HEK293 (cell line): ENCODE measurements at regions of chr5 and their contacts with region 1.

Region 1: GRCh38 chr5:14644623-14645237 is 19.8 kb upstream of the OTULIN start:
- H3K4me3 ChIP-seq: no peak overlapping the region
- H3K27ac ChIP-seq: no peak overlapping the region
- H3K4me1 ChIP-seq: no peaks in the 10 kb centered on the region
- CTCF ChIP-seq: no peak

Region 2: DNA sequence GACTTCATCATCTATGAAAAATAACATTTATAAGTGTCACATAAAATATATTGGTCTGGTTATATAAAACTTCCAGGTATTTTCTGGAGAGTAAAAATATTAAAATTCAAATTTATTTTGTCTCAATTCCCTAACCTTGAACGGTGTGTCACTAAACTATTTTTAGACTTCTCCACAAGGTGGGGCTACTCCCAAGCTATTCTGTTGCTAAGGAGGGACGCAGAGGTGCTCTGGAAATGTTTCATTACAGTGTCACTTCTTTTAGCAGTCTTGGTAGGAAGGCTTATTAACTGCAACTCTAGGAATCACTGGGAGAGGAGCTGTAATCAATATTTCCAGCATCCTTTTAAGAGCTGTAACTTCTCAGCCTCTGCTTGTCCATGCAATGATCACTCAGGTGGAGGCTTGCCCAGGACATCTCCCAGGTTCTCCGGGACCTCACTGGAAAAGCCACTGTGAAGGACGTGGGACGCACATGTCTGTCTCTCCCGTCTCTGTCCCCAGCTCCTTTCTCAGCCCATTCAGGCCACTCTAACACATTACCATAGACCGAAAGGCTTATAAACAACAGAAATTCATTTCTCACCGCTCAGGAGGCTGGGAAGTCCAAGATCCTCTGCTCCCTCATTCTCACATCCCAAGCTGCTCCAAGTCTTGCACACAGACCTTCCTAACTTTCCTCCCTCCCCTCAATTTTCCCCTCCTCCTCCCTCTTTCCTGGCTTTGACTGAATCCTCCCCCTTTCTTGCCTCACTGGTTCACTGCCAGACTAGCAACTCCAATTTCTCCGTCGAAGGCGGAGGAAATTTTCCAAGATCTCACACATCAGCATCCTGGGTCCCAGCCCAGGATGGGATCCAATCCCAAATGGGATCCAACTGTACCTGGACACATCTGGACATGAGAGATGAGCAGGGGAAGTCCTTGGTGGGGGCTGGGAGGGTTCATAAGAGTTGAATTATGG is 667.6 kb before region 1 on chr5:
- CTCF ChIA-PET with region 1: interaction called, 42 read pairs
- POLR2A ChIA-PET with region 1: no interaction called
- H3K4me3 ChIP-seq: no peak overlapping the region
- H3K27ac ChIP-seq: no peak overlapping the region
- H3K4me1 ChIP-seq: no peaks in the 10 kb centered on the region
- CTCF ChIP-seq: peak; percentile 32; the same call in 1 of the 2 replicates

Region 3: DNA sequence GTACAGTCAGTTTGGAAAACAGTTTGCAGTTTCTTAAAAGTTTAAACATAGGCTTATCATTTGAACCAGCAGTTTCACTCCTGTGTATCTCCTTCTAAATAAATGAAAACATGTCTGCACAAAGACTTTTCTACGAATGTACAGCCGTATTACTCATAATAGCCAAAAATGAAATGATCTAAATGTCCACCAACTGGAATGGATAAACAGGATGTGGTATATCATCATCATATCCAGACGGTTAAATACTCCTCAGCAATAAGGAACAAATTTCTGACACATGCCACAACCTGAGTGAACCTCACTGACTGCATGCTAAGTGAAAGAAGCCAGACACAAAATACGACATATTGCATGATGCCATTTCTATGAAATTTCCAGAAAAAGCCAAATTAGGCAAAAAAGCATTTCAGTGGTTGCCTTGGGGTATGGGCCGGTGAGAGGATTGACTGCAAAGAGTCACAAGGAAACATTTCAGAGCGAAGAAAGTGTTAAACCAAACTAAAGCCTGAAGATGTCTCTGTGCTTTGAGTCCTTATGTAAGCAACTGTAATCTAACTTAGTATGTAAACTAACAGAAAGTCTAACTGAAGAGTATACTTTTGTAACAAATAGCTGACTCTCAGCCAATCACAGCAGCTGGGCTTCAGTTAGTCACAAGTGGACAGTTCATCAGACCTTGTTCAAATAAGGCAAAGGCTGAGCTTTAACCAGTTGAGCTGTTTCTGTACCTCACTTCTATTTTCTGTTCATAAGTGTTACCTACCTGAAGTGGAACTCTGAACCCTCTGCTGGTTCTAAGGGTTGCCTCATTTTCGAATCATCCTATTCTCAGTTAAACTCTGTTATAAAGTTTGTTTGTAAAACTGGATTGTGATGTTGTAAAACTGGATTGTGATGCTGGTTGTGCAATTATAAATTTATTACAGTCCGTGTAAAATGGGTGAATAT is 436.4 kb before region 1 on chr5:
- CTCF ChIA-PET with region 1: no interaction called
- POLR2A ChIA-PET with region 1: no interaction called
- H3K4me3 ChIP-seq: no peak overlapping the region
- H3K27ac ChIP-seq: no peak overlapping the region
- H3K4me1 ChIP-seq: peaks cover 38% of the 10 kb centered on the region
- CTCF ChIP-seq: no peak

Region 4: DNA sequence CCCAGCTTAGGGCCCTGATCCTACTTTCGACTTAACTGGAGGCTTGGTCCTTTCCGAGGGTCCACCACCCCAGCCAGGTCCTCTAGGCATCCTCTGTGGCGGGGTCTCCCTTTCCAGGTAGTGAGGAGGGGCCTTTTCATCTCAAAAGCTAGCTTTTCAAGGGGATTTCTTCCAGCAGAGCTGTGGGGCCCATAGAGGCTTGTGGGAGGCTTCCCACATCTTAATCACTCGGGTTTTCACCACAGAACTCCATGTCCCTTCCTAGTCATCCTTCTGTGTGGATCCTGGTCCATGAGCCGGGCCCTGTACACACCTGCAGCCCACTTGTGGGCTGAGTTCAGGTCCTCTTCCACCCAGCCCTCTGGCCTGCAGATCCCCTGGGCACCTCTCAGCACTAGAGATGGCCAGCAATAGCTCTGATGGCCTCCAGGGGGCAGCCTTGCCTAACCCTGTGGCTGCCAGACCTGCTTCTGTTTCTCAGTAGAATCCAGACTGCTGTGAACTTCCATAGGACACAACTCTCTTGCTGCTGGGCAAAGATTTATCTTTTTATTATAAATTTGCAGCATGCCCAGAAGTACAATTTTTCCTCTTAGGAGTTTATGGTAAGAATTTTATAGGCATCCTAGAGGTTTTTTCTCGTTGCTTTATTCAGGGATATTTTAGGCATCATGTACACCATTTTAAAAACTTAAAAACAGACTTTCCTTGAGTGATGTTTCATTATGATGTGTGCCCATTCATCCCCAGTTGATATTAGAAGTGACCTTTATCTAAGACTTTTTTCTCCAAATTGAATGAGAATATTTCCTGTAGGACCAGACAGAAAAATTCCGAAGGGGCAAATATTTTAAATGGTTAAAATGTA is 292.7 kb before region 1 on chr5:
- CTCF ChIA-PET with region 1: interaction called, 17 read pairs
- POLR2A ChIA-PET with region 1: interaction called, 5 read pairs
- H3K4me3 ChIP-seq: no peak overlapping the region
- H3K27ac ChIP-seq: no peak overlapping the region
- H3K4me1 ChIP-seq: no peaks in the 10 kb centered on the region
- CTCF ChIP-seq: peak; percentile 82

Region 5: GRCh38 chr5:14364576-14365472 is 279.9 kb before region 1 on chr5:
- CTCF ChIA-PET with region 1: interaction called, 20 read pairs
- POLR2A ChIA-PET with region 1: no interaction called
- H3K4me3 ChIP-seq: no peak overlapping the region
- H3K27ac ChIP-seq: no peak overlapping the region
- H3K4me1 ChIP-seq: no peaks in the 10 kb centered on the region
- CTCF ChIP-seq: peak; percentile 18; the same call in 1 of the 2 replicates

Region 6: DNA sequence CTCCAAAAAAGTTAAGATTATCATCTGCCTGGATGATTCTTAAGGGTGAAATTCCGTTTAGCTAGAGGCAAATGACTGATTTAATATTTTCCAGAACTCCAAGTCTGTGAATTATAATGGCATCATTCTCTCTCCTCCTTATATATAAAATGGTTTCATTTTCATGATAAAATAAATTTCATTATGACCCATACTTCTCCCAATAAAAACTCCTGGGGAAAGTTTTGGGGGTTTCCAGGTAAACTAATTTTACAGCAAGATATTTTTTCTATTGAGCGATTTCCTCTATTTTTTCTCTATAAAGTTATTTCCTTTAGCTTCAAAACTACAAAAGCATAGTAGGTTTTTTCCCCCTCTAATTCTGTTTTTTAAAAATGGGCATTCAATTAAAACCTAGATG is 12.2 kb after region 1 on chr5:
- CTCF ChIA-PET with region 1: interaction called, 31 read pairs
- POLR2A ChIA-PET with region 1: no interaction called
- H3K4me3 ChIP-seq: no peak overlapping the region
- H3K27ac ChIP-seq: no peak overlapping the region
- H3K4me1 ChIP-seq: no peaks in the 10 kb centered on the region
- CTCF ChIP-seq: no peak